ENCODE measurements at regions of chr3 and their contacts with region 1.

Region 1: GRCh38 chr3:185444329-185444728 is 54.5 kb downstream of the TMEM41A start:
- DNase-seq: no peak
- ATAC-seq: no peak
- H3K4me3 ChIP-seq: no peak overlapping the region
- H3K27ac ChIP-seq: no peak overlapping the region
- H3K4me1 ChIP-seq: no peaks in the 10 kb centered on the region
- H3K27me3 ChIP-seq: no peaks in the 10 kb centered on the region
- CTCF ChIP-seq: no peak
- EP300 ChIP-seq: no peak
- POLR2A ChIP-seq: no peak
- RAD21 ChIP-seq: no peak

Region 2: DNA sequence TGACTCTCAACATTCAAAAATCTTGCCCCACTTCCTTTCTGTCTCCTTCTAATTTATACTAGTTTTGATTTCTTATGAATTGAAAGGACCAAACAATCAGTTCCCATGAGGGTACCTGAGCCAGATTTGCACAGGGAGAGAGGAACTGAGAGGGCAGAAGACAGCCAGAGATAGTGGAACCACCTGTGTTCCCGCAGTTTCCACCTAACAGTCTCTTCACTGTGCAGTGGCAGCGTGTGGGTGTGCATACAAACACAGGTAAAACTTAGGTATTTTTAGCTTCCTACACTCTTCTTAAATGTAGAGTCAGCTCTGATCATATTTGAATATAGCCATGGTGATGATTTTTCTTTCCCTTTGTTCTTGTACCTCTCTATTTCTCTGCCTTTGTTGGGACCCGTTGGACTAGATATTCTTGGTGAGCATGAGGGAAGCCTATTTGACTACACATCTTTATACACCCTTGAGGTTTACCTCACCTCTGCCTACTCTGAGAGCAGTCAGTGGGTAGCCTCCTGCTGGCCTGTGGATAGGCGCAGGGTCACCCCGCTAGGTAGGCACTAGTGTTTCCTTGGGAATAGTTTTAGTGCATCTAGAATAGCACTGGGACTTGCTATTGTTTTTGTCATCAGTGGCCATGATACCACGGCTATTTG is 22.6 kb before region 1 on chr3:
- CTCF ChIA-PET with region 1: no interaction called
- POLR2A ChIA-PET with region 1: interaction called, 11 read pairs
- RAD21 ChIA-PET with region 1: no interaction called
- SMC1A ChIA-PET with region 1: interaction called, 3 read pairs
- in situ Hi-C with region 1: no loop called
- intact Hi-C with region 1: no loop called
- DNase-seq: peak; percentile 27
- ATAC-seq: peak; percentile 82
- H3K4me3 ChIP-seq: peak overlapping the region; percentile 37
- H3K27ac ChIP-seq: no peak overlapping the region
- H3K4me1 ChIP-seq: peaks cover 32% of the 10 kb centered on the region
- H3K27me3 ChIP-seq: no peaks in the 10 kb centered on the region
- CTCF ChIP-seq: no peak
- EP300 ChIP-seq: no peak
- POLR2A ChIP-seq: no peak
- RAD21 ChIP-seq: no peak

Measured in GM12878 (cell line).